B cell (primary cell): ENCODE measurements at regions of chr1 and their contacts with region 1.

Region 1: GRCh38 chr1:47333922-47334764 is 553 bp downstream of the CMPK1 start:
- DNase-seq: peak; percentile 87
- ATAC-seq: peak; percentile 85
- H3K4me3 ChIP-seq: peak overlapping the region; percentile 59 to 97 (median 80)
- H3K4me3 Mint-ChIP-seq: peak overlapping the region; percentile 97
- H3K27ac ChIP-seq: peak overlapping the region; percentile 64 to 83
- H3K27ac Mint-ChIP-seq: peak overlapping the region; percentile 92
- H3K4me1 ChIP-seq: peaks cover 14 to 19% of the 10 kb centered on the region in 2 donors
- H3K4me1 Mint-ChIP-seq: peaks cover 17% of the 10 kb centered on the region
- H3K27me3 ChIP-seq: no peaks in the 10 kb centered on the region
- H3K27me3 Mint-ChIP-seq: no peaks in the 10 kb centered on the region
- CTCF ChIP-seq: no peak

Region 2: DNA sequence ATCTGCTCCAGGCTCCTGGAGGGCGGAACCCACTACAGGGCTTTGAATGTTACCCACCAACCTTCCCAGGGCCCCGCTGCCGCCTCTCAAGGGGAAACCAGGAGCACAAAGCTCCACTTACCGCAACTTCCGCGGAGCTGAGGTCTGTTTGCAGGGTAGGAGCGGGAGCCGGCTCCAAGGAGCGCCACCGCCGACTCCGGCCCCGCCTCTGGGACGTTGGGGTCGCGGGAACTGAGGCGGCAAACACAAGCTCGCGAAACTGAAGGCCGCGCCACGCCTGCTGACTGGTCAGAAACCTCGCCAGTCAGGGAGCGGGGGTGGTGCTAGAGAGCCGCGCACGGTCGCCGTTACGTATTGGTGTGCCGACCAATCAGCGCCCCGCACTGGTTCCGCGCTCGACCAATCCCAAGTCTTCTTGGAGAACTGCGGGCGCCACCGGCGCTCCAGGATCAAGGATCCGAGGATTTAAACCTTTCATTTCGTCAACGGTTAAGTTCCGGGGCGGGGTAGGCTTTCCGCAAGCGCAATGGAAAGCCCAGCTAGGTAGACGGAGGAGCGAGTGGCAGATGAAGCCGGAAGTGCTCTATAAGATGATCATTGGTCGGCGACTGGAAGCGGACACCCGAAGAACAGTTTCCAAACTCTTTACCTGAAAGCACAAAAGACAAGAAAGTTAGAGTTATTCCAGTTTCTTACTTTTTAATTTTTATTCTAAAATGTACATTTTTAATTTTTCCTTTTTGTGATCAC is 20.1 kb before region 1 on chr1 and contains the start of gene STIL:
- CTCF ChIA-PET with region 1: interaction called, 19 read pairs
- POLR2A ChIA-PET with region 1: interaction called, 17 read pairs
- intact Hi-C with region 1: loop called (anchors 1 kb)
- DNase-seq: peak; percentile 98
- ATAC-seq: peak; percentile 98
- H3K4me3 ChIP-seq: peak within 1 kb of the TSS; percentile 60 to 95 (median 70)
- H3K4me3 Mint-ChIP-seq: peak within 1 kb of the TSS; percentile 89
- H3K27ac ChIP-seq: peak within 1 kb of the TSS; percentile 78 to 85
- H3K27ac Mint-ChIP-seq: peak within 1 kb of the TSS; percentile 93
- H3K4me1 ChIP-seq: peaks cover 0 to 8% of the 10 kb centered on the region in 2 donors
- H3K4me1 Mint-ChIP-seq: peaks cover 12% of the 10 kb centered on the region
- H3K27me3 ChIP-seq: no peaks in the 10 kb centered on the region
- H3K27me3 Mint-ChIP-seq: no peaks in the 10 kb centered on the region
- CTCF ChIP-seq: no peak
- total RNA-seq, gene STIL: 1.6 and 1.8 TPM in 2 replicates

Region 3: DNA sequence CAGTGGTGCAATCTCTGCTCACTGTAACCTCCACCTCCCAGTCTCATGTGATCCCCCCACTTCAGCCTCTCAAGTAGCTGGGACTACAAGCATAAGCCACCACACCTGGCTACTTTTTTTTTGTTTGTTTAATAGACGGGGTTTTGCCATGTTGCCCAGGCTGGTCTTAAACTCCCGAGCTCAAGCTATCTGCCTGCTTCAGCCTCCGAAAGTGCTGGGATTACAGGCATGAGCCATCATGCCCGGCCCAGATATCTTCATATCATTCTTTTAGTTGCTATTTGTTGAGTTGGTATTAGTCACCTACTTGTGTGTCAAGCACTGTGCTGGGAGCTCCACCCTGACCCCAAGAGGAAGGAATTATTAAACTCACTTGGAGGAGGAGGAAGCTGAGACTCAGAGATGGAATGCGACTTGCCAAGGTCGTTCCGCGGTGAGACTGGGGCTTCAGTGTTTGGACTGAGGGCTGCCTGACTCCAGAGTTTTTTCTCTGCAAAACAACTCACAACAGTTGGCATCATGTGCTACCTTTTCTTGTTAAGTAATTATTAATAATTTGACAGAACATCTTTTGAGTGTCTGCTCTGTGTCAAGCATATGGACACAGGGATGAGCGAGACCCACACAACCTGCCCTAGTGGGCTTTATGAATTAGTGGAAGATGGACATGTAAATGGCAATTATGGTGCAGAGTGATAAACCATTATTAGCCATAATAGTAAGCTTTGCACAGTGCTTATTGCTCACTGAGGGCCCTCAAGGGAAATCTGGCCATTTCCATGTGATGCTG is 235.7 kb after region 1 on chr1:
- CTCF ChIA-PET with region 1: no interaction called
- POLR2A ChIA-PET with region 1: no interaction called
- intact Hi-C with region 1: no loop called
- DNase-seq: no peak
- ATAC-seq: no peak
- H3K4me3 ChIP-seq: no peak overlapping the region
- H3K4me3 Mint-ChIP-seq: no peak overlapping the region
- H3K27ac ChIP-seq: no peak overlapping the region
- H3K27ac Mint-ChIP-seq: no peak overlapping the region
- H3K4me1 ChIP-seq: no peaks in the 10 kb centered on the region
- H3K4me1 Mint-ChIP-seq: no peaks in the 10 kb centered on the region
- H3K27me3 ChIP-seq: peaks cover 0 to 5% (median 0%) of the 10 kb centered on the region in 4 experiments
- H3K27me3 Mint-ChIP-seq: peaks cover 7% of the 10 kb centered on the region
- CTCF ChIP-seq: no peak